Cardiac septum (tissue), 1 donor: ENCODE measurements at regions of chr5 and their contacts with region 1.

Region 1: GRCh38 chr5:147391781-147392180 is 118.1 kb downstream of the DPYSL3 start:
- DNase-seq: no peak

Region 2: GRCh38 chr5:146446853-146447733 is 944.7 kb before region 1 on chr5 and contains the start of gene TCERG1:
- intact Hi-C with region 1: no loop called
- DNase-seq: peak; percentile 98
- total RNA-seq, gene TCERG1: 33.2 TPM

Region 3: GRCh38 chr5:147558826-147559225 is 167.0 kb after region 1 on chr5:
- intact Hi-C with region 1: loop called (anchors 5 kb)
- DNase-seq: no peak